Caco-2 (cell line): ENCODE measurements at regions of chr20 and their contacts with region 1.

Region 1: DNA sequence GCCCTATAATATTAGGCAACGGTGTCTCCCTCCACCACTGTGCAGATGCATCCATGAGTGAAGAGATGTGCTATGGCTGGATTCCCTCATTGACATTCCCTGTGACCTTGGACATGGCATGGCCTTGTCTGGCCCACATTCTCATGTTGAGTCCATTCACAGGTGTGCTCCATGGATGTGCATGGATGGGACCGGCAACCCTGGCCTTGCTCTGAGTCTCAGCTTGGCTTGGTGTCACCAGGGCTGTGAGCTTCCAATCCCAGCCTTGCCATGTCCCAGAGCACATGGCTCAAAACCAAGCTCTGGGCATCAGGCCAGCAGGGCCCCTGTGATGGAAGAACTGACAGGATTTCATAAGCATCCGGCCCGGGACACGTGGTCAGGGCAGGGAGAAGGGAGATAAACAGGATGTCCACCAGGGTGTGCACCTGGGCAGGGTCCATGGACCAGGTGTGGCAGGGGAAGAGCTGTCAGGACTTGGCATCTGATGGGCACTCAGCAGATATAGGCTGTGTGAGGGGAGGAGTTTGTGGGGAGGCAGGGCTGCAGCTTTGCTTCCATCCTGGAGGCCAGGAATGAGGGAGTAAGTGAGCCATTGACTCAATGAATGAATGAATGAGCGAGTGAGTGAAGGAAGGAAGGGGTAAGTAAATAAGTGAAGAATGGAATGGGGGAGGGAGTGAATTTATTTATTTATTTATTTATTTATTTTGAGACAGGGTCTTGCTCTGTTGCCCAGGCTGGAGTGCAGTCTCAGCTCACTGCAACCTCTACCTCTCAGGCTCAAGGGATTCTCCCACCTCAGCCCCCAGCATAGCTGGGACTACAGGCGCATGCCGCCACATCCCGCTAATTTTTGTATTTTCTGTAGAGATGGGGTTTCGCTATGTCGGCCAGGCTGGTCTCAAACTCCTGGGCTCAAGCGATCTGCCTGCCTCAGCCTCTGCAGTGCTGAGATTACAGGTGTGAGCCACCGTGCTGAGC is 15.7 kb downstream of the NRSN2 start:
- DNase-seq: peak; percentile 68 to 74
- H3K4me3 ChIP-seq: no peak overlapping the region
- H3K4me3 Mint-ChIP-seq: no peak overlapping the region
- H3K27ac Mint-ChIP-seq: peak overlapping the region; percentile 49
- H3K4me1 ChIP-seq: peaks cover 66% of the 10 kb centered on the region
- H3K4me1 Mint-ChIP-seq: peaks cover 73% of the 10 kb centered on the region
- H3K27me3 ChIP-seq: no peaks in the 10 kb centered on the region
- H3K27me3 Mint-ChIP-seq: no peaks in the 10 kb centered on the region
- CTCF ChIP-seq: peak in 1 of 2 experiments; percentile 41

Region 2: DNA sequence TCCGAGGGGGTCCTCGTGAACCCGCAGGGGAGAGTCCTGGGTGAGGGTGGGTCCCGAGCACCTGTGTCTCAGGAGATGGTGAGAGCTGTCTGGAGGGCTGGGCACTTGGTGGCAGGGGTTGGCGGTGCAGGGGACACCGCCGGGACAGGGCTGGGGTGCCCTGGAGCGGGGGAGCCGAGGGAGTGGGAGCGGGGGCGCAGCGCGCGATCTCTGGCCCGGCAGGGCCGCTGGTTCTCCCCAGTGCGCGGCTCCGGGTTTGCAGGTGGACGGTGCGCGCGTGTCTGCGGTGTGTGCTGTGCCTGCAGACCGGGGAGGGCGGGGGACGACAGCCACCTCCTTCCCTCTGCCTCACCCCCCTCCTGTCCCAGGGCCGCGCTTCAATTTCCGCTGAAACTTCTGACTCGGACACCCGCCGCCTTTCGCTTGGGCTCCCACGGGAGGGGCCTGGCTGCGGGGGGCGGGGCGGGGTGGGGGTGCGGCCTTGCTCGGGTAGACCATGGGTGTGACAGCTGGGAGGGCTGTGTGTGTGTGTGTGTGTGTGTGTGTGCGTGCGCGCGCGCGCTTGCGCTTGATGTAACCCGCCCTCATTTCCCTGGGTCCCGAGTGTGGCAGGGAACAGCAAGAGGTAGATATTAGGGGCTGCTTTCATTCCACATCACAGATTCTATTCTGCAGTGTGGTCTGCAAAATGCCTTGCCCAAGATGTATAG is 19.2 kb after region 1 on chr20:
- CTCF ChIA-PET with region 1: interaction called, 8 read pairs
- POLR2A ChIA-PET with region 1: interaction called, 22 read pairs
- intact Hi-C with region 1: loop called (anchors 2 kb)
- DNase-seq: peak; percentile 83 to 85
- H3K4me3 ChIP-seq: peak overlapping the region; percentile 97
- H3K4me3 Mint-ChIP-seq: peak overlapping the region; percentile 83
- H3K27ac Mint-ChIP-seq: peak overlapping the region; percentile 92
- H3K4me1 ChIP-seq: peaks cover 12% of the 10 kb centered on the region
- H3K4me1 Mint-ChIP-seq: peaks cover 19% of the 10 kb centered on the region
- H3K27me3 ChIP-seq: no peaks in the 10 kb centered on the region
- H3K27me3 Mint-ChIP-seq: no peaks in the 10 kb centered on the region
- CTCF ChIP-seq: no peak

Region 3: GRCh38 chr20:588932-589672 is 226.5 kb after region 1 on chr20:
- CTCF ChIA-PET with region 1: no interaction called
- POLR2A ChIA-PET with region 1: no interaction called
- intact Hi-C with region 1: no loop called
- DNase-seq: peak in 1 of 2 experiments; percentile 10
- H3K4me3 ChIP-seq: no peak overlapping the region
- H3K4me3 Mint-ChIP-seq: no peak overlapping the region
- H3K27ac Mint-ChIP-seq: no peak overlapping the region
- H3K4me1 ChIP-seq: no peaks in the 10 kb centered on the region
- H3K4me1 Mint-ChIP-seq: no peaks in the 10 kb centered on the region
- H3K27me3 ChIP-seq: no peaks in the 10 kb centered on the region
- H3K27me3 Mint-ChIP-seq: peaks cover 20% of the 10 kb centered on the region
- CTCF ChIP-seq: no peak